GM18951 (cell line): ENCODE measurements at regions of chr22 and their contacts with region 1.

Region 1: DNA sequence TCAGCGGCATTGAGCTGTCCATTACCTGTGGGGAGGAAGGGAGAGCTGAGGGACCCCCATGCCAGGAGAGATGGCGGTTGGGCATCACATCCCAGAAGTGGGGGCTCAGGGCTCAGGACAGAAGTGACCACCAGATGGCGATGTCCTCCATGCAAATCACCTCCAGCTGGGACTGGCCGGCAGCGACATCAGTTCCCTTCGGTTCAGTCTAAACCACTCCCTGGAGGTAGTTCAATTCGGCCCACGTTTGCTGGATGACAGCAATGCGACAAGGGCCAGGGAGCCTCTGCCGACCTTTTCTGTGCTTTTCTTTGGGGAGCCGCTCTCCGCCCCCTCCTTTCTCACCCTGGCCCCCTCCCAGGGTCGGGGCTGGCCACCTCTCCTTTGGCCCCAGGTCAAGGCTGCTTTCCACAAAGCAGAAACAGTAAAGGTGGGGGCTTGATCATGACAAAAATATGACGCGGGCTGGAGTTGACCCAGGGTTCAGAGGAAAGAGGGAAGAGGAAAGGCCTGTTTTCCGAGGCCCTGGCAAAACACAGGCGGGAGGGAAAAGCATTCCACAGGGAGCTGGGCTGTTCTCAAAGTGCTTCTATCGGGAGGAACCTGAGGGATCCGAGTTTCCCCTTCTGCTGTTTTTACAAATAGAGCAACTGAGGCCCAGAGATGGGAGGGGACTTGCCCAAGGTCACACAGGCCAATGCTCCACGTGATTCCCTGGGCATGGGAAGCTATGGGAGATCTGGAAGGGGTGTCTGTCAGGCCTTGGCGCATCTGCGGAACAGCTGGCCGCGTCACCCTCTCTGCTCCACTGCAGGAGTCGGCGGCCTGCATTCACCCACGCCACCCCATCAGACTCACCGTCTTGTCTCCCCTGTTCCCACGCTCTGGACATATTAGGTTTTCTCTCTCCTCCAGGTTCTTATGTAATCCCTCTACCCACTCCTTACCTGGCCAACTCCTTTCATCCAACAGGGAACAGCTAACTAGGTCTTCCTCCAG is 54.7 kb downstream of the FBXO7 start:
- POLR2A ChIP-seq: no peak

Region 2: GRCh38 chr22:32800994-32801942 is 272.0 kb after region 1 on chr22 and contains the start of gene TIMP3:
- in situ Hi-C with region 1: loop called (anchors 25 kb)
- POLR2A ChIP-seq: no peak

Region 3: DNA sequence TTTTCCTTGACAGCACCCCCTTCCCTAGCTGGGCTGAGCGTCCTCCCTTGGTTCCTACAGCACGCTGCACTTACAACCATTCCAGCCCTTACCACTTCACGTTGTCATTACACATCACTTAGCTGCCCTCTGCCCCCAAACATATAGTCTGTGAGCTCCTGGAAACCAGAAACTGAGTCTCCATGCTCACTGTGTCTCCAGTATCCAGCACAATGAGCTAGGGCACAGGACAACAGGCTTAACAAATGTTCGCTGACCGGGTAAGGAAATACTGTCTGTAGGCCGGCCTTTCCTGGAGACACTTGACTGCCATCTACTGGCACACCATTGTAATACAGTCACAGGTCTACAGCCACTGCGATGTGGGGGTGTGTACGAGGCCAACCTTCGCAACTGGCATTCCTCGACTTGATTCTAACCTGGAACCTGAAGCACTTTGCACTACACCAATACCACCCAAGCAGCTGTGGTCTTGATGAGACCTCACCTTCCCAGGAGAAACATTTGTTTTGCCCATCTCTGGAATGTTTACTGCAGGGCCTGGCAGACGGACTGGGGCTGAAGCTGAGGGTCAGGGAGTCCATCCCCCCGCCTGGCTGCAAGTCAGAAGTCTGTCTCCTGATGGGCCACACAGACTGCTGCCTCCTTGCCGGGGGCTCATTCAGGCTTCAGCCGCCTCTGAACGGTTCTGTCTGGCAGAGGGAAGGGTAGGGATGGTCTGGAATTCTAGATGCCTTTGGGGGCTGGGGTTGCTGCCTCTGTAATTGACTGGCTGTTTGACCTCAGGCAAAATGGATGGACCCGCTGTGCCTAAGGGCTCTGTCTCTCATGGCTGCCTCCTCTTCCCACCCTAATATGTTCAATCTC is 456.8 kb after region 1 on chr22:
- in situ Hi-C with region 1: loop called (anchors 25 kb)
- POLR2A ChIP-seq: no peak